ENCODE measurements at regions of chr12 and their contacts with region 1.

Region 1: DNA sequence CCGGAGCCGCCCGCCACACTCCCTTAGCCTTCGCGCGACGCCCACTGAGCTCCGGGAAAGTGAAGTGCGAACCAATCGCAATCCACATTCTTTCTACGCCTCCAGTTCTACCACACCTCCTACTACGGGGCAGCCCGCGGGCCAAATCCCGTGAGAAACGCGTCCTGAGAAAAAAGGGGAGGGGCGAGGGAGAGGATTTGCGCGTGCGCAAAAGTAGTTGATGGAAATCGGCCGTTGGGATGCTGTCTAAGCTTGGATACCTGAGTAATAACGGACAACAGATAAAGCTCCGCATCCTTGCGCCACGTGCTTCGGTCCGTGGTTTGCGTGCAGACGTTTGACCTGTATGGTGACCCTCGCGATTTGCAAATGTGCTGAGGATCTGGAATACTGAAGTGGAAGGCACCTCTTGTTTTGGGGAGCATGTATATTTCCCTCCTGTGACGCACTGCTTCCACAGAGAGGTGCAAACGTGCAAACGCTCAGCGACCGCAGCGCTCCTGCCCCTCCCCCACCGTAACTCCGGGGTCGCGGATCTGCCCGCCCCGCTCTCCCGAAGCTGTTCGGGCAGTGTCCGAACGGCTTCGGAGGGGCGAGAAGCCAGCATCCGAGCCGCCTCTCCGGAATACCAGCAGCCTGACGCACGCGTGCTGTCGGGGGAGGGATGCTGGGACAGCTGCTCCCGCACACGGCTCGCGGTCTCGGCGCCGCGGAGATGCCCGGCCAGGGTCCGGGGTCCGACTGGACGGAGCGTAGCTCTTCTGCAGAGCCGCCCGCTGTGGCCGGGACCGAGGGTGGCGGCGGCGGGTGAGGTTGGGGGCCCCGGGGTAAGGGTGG is at the starts of genes FAM216A and GPN3:
- DNase-seq: peak; percentile 96
- CTCF ChIP-seq: no peak

Region 2: DNA sequence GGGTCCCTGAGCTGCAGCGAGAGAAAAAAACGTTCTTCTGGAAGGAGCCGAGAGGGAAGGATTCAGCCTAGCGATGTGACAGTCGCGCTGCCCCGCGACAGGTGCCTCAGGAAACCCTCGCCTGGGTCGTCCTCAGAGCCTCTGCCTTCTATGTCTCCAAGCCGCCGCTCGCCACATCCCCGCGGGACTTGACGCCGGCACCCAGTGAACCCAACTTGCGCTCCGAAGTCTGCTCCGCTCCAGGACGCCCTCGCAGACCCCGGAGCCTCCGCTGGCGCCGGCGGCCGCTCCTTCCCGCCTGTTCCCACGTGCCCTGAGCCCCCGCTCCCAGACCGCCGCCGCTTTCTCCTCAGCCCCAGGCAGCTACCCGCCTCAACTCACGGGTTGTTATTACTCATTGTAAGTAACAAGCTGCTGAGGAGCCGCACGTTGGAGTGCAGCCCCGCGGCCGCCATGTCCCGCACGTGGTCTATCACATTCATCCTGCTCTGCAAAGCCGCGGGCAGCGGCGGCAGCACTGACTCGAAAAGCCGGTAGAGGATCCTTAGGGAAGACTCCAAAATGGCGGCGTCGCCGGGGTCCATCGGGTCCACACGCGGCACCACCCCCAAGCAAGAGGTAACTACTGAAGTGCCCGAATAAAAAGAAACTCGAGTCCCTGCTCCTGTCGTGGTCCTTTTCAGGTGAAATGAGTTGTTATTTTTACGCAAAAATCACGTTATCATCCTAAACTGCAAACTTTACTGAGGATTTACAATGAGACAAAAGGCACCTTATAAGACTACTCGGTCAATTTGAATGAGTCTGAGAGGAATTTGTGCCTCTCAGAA is 65.1 kb before region 1 on chr12 and contains the start of gene ANAPC7:
- CTCF ChIA-PET with region 1: no interaction called
- POLR2A ChIA-PET with region 1: no interaction called
- DNase-seq: peak; percentile 93
- CTCF ChIP-seq: no peak

Region 3: GRCh38 chr12:110501752-110502738 is 33.6 kb after region 1 on chr12 and contains the starts of genes RAD9B and VPS29:
- CTCF ChIA-PET with region 1: interaction called, 32 read pairs
- POLR2A ChIA-PET with region 1: no interaction called
- DNase-seq: peak; percentile 94
- CTCF ChIP-seq: no peak

Region 4: DNA sequence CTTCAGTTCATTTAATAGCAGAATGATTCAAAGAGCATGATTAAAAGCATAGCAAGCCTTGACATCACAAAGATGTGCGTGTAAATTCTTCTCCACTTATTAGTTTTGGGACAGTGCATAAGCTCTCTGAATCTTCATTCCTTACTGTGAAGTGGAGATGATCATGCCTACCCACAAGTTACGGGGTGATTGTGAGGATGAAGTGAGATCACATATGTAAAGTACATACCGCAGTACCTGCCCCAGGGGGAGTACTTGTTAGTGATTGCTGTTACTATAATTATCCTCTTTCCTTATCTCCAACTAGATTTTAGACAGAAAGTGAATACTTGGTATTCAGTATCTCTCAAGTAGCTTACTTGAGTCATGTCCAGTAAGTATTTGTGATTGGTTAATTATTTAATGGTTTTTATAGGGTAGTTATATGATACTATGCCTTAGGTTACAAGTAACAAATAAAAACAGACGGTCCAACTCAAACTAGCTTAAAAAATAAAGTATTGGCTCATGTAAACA is 39.7 kb after region 1 on chr12:
- CTCF ChIA-PET with region 1: interaction called, 10 read pairs
- POLR2A ChIA-PET with region 1: no interaction called
- DNase-seq: no peak
- CTCF ChIP-seq: no peak